ENCODE measurements at regions of chr3 and their contacts with region 1.

Region 1: GRCh38 chr3:78659386-78659987 is 1108.3 kb downstream of the ROBO1 start:
- DNase-seq: peak; percentile 5 to 54 (median 10)
- ATAC-seq: no peak
- H3K4me3 ChIP-seq: no peak overlapping the region
- H3K27ac ChIP-seq: no peak overlapping the region
- H3K4me1 ChIP-seq: no peaks in the 10 kb centered on the region
- H3K27me3 ChIP-seq: no peaks in the 10 kb centered on the region
- CTCF ChIP-seq: peak in 2 of 3 experiments; percentile 34 to 61; a peak in 3 of 6 replicates
- EP300 ChIP-seq: no peak
- POLR2A ChIP-seq: no peak
- RAD21 ChIP-seq: peak; percentile 59 to 68

Region 2: DNA sequence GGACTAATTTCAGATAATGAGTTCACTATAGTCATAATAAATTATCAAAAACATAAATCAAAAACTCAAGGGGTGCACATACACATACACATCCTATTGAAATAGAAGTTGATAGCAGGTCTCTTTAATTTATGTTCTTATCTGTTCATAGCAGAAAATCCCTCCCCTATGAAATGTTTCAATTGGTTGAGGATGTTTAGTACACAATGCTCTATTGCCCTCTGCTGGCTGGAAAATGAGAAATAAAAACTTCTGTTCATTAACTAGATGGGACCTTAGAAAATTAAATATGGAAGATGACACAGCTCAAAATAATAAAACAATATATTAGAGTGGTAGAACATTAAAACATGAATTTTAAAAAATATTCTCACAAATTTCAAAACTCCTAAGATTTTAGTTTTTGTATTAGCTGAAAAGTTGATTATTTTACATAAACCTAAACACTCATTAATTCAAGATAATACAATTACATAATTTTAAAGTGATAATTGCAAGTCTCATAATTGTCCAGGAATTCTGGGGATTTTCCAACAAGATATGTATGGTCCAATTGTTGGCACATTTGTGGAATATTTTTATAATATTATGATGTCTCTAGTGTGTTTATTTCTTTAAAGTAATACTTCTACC is 373.3 kb after region 1 on chr3:
- CTCF ChIA-PET with region 1: interaction called, 6 read pairs
- POLR2A ChIA-PET with region 1: no interaction called
- in situ Hi-C with region 1: loop called (anchors 25 kb)
- intact Hi-C with region 1: loop called (anchors 1 kb)
- DNase-seq: peak in 2 of 4 experiments; percentile 5 to 17
- ATAC-seq: no peak
- H3K4me3 ChIP-seq: no peak overlapping the region
- H3K27ac ChIP-seq: no peak overlapping the region
- H3K4me1 ChIP-seq: no peaks in the 10 kb centered on the region
- H3K27me3 ChIP-seq: no peaks in the 10 kb centered on the region
- CTCF ChIP-seq: peak in 1 of 3 experiments; percentile 26; a peak in 1 of 6 replicates
- EP300 ChIP-seq: no peak
- POLR2A ChIP-seq: no peak
- RAD21 ChIP-seq: peak; percentile 39 to 40; a peak in 3 of 4 replicates

Region 3: DNA sequence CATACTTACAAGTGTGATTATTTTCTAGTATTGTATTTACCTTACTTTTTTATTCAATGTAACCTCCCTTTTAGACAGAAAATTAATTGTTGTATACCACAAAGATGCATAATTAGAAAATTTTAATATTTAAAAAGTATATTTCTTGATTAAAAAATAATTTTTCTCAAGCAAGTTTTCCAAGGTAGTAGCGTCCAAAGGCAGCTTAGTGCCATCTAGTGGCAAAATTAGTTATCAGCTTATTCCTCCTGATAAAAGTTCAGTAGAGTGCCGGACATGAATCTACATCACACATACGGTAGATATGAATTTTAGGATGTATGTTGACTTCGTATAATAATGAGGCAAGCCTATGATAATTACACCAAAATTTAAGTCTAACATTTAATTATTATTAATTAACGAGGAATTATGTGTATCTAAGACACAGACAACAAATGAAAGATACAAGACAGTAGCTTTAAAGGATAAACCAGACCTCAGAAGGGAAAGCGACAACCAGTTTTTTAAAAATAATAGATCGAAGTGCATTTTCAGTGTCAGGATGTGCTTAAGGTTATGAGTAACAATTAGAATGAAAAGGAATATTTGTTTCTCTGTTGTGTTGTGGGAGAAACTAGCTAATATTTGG is 702.4 kb after region 1 on chr3:
- CTCF ChIA-PET with region 1: no interaction called
- POLR2A ChIA-PET with region 1: no interaction called
- in situ Hi-C with region 1: no loop called
- intact Hi-C with region 1: loop called (anchors 5 kb)
- DNase-seq: peak in 2 of 4 experiments; percentile 8 to 14
- ATAC-seq: no peak
- H3K4me3 ChIP-seq: no peak overlapping the region
- H3K27ac ChIP-seq: no peak overlapping the region
- H3K4me1 ChIP-seq: no peaks in the 10 kb centered on the region
- H3K27me3 ChIP-seq: no peaks in the 10 kb centered on the region
- CTCF ChIP-seq: peak in 2 of 3 experiments; percentile 12 to 38; a peak in 2 of 6 replicates
- EP300 ChIP-seq: no peak
- POLR2A ChIP-seq: no peak
- RAD21 ChIP-seq: peak in 1 of 2 experiments; percentile 31; a peak in 2 of 4 replicates

Region 4: GRCh38 chr3:79497447-79498111 is 838.1 kb after region 1 on chr3:
- CTCF ChIA-PET with region 1: no interaction called
- POLR2A ChIA-PET with region 1: no interaction called
- in situ Hi-C with region 1: loop called (anchors 25 kb)
- intact Hi-C with region 1: loop called (anchors 5 kb)
- DNase-seq: peak; percentile 7 to 12 (median 8)
- ATAC-seq: no peak
- H3K4me3 ChIP-seq: no peak overlapping the region
- H3K27ac ChIP-seq: no peak overlapping the region
- H3K4me1 ChIP-seq: no peaks in the 10 kb centered on the region
- H3K27me3 ChIP-seq: no peaks in the 10 kb centered on the region
- CTCF ChIP-seq: peak in 1 of 3 experiments; percentile 46; a peak in 3 of 6 replicates
- EP300 ChIP-seq: no peak
- POLR2A ChIP-seq: no peak
- RAD21 ChIP-seq: peak in 1 of 2 experiments; percentile 34; a peak in 3 of 4 replicates

Measured in K562 (cell line).